Spleen (tissue), 13 donors: ENCODE measurements at regions of chr7 and their contacts with region 1.

Region 1: GRCh38 chr7:100081535-100082102 is at the start of gene ZNF3:
- DNase-seq: peak; percentile 99
- H3K4me3 ChIP-seq: peak within 1 kb of the TSS; percentile 91 to 100 (median 97)
- H3K27ac ChIP-seq: peak within 1 kb of the TSS; percentile 75 to 92 (median 88)
- H3K4me1 ChIP-seq: peaks cover 21 to 53% (median 36%) of the 10 kb centered on the region in 6 donors
- H3K27me3 ChIP-seq: no peaks in the 10 kb centered on the region
- CTCF ChIP-seq: peak; percentile 94 to 99 (median 96)
- POLR2A ChIP-seq: peak in 1 of 3 donors; percentile 60
- total RNA-seq, gene ZNF3: 25.7 to 34.0 (median 29.3) TPM

Region 2: DNA sequence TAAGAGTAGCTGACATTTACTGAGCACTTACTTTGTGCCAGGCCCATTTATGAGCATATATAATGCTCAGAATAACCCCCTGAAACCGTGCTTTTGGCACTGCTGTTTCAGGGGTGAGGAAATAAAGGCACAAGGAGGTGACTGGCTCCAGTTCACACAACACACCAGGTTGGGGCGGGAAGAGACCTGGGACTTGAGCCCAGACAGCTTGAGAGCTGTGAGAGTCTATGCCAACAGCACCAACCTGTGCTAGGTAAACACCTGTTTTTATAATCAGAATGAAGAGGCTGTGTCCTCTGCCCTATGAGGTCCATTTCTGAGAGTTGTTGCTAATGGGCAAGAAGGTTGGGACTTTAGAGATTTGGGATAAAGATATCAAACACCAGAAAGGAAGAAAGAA is 97.0 kb before region 1 on chr7:
- intact Hi-C with region 1: loop called (anchors 10 kb)
- DNase-seq: peak; percentile 7
- H3K4me3 ChIP-seq: no peak overlapping the region
- H3K27ac ChIP-seq: no peak overlapping the region
- H3K4me1 ChIP-seq: peaks cover 0 to 6% (median 0%) of the 10 kb centered on the region in 6 donors
- H3K27me3 ChIP-seq: no peaks in the 10 kb centered on the region
- CTCF ChIP-seq: no peak
- POLR2A ChIP-seq: no peak

Region 3: GRCh38 chr7:100126931-100127865 is 45.6 kb after region 1 on chr7 and contains the start of gene MBLAC1:
- intact Hi-C with region 1: loop called (anchors 5 kb)
- DNase-seq: peak; percentile 96
- H3K4me3 ChIP-seq: peak within 1 kb of the TSS; percentile 64 to 89 (median 83)
- H3K27ac ChIP-seq: peak within 1 kb of the TSS; percentile 91 to 99 (median 96)
- H3K4me1 ChIP-seq: peaks cover 25 to 76% (median 53%) of the 10 kb centered on the region in 6 donors
- H3K27me3 ChIP-seq: no peaks in the 10 kb centered on the region
- CTCF ChIP-seq: peak in 1 of 11 experiments; percentile 5
- POLR2A ChIP-seq: peak in 1 of 3 donors; percentile 45
- total RNA-seq, gene MBLAC1: 1.7 to 4.4 (median 2.0) TPM